ENCODE measurements at regions of chr6 and their contacts with region 1.

Region 1: DNA sequence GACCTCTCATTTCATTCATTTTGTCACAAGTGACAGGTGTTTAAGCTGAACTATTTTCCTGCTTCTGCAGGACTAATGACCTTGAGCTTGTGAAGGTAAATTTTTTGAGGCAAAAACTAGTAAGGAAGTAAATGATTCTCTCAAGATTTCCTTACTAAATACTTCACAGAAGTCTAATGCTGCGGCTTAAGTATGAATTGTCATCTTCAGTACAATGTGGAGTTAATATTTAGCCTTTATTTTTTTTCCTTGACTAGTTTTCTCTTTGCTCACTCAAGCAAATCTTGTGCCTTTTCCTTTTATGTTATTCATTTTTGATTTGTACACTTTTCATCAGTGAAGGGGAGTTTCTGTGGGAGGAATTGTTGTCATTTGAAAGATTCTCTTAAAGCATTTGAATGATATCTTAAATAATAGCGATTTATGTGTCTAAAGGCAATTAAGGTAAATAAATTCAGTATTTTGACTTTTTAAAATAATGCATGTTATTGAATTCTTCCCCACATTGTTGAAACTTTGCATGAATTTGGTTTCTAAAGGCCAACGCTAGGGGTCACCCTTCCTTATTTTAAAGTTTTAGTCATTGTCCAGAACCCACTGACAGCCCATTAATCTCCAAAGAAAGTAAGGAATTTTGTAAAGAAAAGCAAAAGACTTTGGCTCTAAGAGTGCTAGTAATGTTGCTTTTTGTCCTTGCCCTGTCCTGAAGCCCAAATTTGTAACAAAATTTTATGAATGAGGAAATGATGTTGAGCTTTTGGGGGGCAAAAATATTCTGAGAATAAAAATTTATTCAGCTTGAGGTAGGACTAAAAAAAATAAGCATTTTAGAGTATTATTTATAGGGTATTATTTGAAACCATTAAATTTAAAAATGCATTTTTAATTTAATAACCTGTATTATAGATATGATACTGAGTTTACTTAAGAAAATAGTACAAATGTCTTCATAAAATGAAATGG is 157.4 kb upstream of the LAMA2 start:
- DNase-seq: peak; percentile 31
- H3K4me3 Mint-ChIP-seq: no peak overlapping the region
- H3K27ac Mint-ChIP-seq: no peak overlapping the region
- H3K4me1 Mint-ChIP-seq: no peaks in the 10 kb centered on the region
- H3K27me3 Mint-ChIP-seq: peaks cover 24% of the 10 kb centered on the region

Region 2: GRCh38 chr6:128742900-128743299 is 17.3 kb after region 1 on chr6:
- CTCF ChIA-PET with region 1: no interaction called
- intact Hi-C with region 1: no loop called
- DNase-seq: no peak
- H3K4me3 Mint-ChIP-seq: no peak overlapping the region
- H3K27ac Mint-ChIP-seq: no peak overlapping the region
- H3K4me1 Mint-ChIP-seq: peaks cover 7% of the 10 kb centered on the region
- H3K27me3 Mint-ChIP-seq: no peaks in the 10 kb centered on the region

Region 3: GRCh38 chr6:129567374-129567773 is 841.8 kb after region 1 on chr6:
- CTCF ChIA-PET with region 1: no interaction called
- intact Hi-C with region 1: loop called (anchors 5 kb)
- DNase-seq: peak; percentile 79
- H3K4me3 Mint-ChIP-seq: no peak overlapping the region
- H3K27ac Mint-ChIP-seq: no peak overlapping the region
- H3K4me1 Mint-ChIP-seq: peaks cover 3% of the 10 kb centered on the region
- H3K27me3 Mint-ChIP-seq: no peaks in the 10 kb centered on the region

Measured in activated naive CD4-positive, alpha-beta T cell treated with anti-CD3 and anti-CD28 coated beads for 36 hours (primary cell).